AG04450 (cell line): ENCODE measurements at regions of chr17 and their contacts with region 1.

Region 1: DNA sequence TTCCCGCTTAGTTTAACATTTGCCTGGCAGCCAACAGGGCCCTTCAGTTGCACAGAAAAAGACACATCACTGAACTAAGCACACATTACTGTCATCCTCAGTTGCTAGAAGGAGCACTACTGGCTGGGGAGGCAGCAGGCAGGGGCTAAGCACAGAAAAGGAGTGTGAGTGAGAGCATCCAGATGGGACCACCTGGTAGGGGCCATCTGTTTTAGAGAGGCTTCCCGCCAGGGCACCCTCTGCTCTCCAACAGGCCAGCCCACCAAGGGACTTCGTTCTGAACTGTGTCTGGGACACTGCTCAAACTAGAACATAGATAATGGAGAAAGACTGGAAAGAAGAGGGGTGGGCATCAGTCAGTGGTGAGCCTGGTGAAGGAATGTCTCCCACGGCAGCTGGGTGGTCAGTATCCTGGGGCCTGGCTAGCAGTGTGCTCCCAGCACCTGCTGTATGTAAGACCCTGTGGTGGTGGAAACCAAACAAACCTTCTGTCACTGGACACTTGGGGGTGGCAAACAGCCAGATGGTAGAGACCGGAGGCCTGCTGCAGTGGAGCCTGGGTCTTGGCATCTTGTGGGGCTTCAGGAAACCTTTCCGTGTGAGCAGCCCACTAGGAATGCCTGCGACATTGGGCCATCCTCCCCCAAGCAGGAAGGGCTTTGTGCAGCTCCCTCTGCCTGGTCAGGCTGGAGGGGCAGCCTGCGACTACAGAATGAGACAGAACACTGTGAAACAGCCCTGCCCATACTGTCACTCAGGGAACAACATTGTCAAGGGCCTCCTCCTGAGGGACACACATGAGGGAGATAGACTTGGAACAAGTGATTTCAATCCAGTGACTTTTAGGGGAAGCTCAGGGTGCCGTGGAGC is 12.8 kb upstream of the RANGRF start:
- DNase-seq: no peak
- H3K4me3 ChIP-seq: no peak overlapping the region
- H3K27ac ChIP-seq: no peak overlapping the region
- H3K27me3 ChIP-seq: no peaks in the 10 kb centered on the region
- CTCF ChIP-seq: no peak

Region 2: GRCh38 chr17:8109661-8110464 is 165.8 kb before region 1 on chr17:
- CTCF ChIA-PET with region 1: no interaction called
- POLR2A ChIA-PET with region 1: no interaction called
- DNase-seq: no peak
- H3K4me3 ChIP-seq: peak overlapping the region; percentile 15; the same call in 1 of the 2 replicates
- H3K27ac ChIP-seq: no peak overlapping the region
- H3K27me3 ChIP-seq: peaks cover 45% of the 10 kb centered on the region
- CTCF ChIP-seq: peak; percentile 70

Region 3: DNA sequence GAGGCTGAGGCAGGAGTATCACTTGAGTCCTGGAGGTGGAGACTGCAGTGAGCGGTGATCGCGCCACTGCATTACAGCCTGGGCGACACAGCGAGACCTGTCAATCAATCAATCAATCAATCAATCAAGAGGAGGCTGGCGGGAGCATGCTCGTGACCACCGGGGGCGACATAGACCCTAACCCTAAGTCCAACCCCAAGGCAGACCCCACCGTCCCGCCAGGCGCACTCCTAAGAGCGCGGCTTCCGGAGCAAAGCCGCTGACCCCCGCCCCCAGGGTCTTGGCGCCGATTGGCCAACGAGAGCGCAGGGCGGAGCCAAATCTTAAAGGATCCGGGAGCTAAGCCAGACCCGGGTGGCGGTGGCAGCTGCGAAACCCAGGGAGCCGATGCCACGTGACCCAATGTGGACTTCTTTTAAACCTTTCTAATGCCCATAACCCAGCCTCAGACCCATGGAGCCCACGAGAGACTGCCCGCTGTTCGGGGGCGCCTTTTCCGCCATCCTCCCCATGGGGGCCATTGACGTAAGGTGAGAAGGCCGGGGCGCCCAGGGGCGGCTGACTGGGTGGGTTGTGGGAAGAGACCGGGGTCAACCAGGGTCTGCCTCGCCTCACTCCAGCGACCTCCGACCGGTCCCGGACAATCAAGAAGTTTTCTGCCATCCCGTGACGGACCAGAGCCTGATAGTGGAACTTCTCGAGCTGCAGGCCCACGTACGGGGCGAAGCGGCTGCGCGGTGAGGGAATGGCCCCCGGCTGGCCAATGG is 12.9 kb after region 1 on chr17 and contains the start of gene RANGRF:
- CTCF ChIA-PET with region 1: interaction called, 5 read pairs
- POLR2A ChIA-PET with region 1: interaction called, 11 read pairs
- DNase-seq: no peak
- H3K4me3 ChIP-seq: peak within 1 kb of the TSS; percentile 84
- H3K27ac ChIP-seq: peak within 1 kb of the TSS; percentile 87
- H3K27me3 ChIP-seq: no peaks in the 10 kb centered on the region
- CTCF ChIP-seq: no peak
- polyA plus RNA-seq, gene RANGRF: 26.4 and 30.8 TPM in 2 replicates

Region 4: GRCh38 chr17:8488901-8489300 is 213.2 kb after region 1 on chr17:
- CTCF ChIA-PET with region 1: no interaction called
- POLR2A ChIA-PET with region 1: no interaction called
- DNase-seq: peak; percentile 90
- H3K4me3 ChIP-seq: no peak overlapping the region
- H3K27ac ChIP-seq: peak overlapping the region; percentile 84
- H3K27me3 ChIP-seq: no peaks in the 10 kb centered on the region
- CTCF ChIP-seq: no peak